ENCODE measurements at regions of chr1 and their contacts with region 1.

Region 1: DNA sequence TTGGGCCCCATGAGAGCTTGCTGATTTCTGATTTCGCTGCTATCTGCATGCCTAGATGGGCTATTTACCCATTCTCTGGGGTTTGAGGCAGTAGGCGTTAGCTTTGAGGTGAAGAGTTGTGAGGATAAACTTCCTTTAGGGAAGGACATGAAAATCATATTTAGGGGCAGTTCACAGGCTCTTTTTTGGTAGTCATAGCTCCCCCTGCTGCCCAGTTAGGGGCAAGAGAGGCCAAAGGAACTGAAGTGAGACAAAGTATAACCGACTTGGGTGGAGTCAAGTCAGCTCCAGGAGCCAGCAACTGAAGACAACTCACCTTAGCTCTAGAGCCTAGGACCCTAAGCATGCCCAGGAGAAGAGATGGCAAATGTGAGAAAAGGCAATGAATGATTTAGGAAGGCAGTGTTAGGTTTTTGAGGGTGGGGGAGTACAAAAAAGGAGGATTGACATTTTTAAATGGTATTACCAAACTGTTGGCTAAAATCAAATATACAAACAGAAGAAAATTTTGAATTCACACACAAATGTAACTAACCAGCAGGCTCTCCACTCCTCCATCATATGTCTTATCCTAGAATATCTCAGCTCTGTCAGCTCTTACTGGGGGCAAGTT is 625.2 kb downstream of the LMO4 start:
- DNase-seq: peak; percentile 59 to 73 (median 70)
- ATAC-seq: peak; percentile 75 to 81
- H3K4me3 ChIP-seq: no peak overlapping the region
- H3K27ac ChIP-seq: no peak overlapping the region
- H3K4me1 ChIP-seq: peaks cover 6% of the 10 kb centered on the region
- H3K27me3 ChIP-seq: no peaks in the 10 kb centered on the region

Region 2: DNA sequence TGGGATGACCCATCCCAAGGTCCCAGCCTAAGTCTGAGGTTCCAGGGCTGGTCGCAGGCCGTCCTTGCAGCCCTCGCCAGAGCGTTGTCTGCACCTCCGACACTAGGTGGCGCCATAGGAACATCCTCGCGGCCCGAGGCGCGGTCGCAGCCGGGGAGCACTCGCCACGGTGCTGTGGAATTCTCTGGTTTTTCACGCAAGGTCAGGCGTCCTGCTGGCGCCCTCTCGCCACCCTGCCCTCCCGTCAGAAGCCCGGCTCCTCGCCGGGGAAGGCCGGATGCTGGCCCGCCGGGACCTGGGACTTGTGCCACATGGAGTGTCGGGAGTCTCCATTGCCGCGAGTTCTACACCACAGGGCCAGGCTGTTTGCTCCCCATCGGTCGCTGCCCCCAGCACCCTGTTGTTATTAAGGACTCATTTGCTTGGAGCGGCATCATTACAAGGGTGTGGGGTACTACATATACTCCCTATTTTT is 822.0 kb before region 1 on chr1:
- intact Hi-C with region 1: loop called in 2 of 4 experiments (anchors 5 to 10 kb)
- DNase-seq: peak; percentile 84 to 92 (median 92)
- ATAC-seq: peak; percentile 91 to 92
- H3K4me3 ChIP-seq: peak overlapping the region; percentile 38
- H3K27ac ChIP-seq: peak overlapping the region; percentile 39
- H3K4me1 ChIP-seq: no peaks in the 10 kb centered on the region
- H3K27me3 ChIP-seq: no peaks in the 10 kb centered on the region

Region 3: GRCh38 chr1:87902830-87903229 is 51.0 kb before region 1 on chr1:
- intact Hi-C with region 1: no loop called
- DNase-seq: no peak
- ATAC-seq: peak; percentile 70 to 76
- H3K4me3 ChIP-seq: no peak overlapping the region
- H3K27ac ChIP-seq: no peak overlapping the region
- H3K4me1 ChIP-seq: no peaks in the 10 kb centered on the region
- H3K27me3 ChIP-seq: no peaks in the 10 kb centered on the region

Measured in right cardiac atrium (tissue), 5 donors.